ENCODE measurements at regions of chr3 and their contacts with region 1.

Region 1: DNA sequence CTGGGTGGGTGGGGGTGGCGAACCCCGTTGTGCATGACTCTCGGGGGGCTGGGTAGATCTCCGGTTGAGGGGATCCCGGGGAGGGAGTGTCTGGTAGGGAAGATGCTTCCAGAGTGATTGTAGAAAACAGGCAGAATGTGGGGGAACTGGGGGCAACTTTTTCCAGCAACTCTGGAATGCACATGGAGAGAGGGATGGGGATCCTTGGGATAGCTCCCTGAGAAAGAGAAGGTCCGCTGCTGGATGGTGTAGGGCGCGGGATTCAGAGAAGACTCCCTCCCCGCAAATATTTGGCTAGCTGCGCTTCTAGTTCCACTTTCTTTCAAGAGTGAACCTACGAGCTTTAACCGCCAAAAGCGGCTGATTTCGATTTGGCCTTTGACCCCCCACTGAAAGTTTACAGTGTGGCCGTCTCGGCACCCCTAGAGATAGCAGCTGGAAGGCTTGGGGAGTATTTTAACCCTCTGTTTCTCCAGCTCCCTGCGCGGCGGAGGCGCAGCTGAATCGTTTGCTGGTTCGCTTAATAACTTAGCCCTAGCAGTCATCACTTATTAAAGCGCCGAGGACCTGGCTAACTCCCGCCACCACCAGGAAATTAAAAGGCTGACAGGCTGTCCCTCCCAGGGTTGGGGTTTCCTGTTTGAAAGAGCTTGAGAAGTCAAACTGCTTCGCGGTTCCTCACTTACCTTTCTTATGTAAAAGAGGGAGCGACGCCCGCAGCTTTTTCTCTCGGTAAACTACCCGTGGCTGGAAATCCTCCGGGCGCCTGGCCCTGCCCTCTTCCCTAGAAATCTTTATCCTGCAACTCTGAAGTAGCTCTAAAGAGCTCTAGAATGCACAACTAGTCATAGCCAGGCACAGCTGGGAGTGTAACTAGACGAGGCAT is 1.2 kb downstream of the PHLDB2 start:
- DNase-seq: peak; percentile 65 to 82 (median 71)
- H3K4me3 ChIP-seq: peak overlapping the region; percentile 88
- H3K27ac ChIP-seq: peak overlapping the region; percentile 84 to 90
- H3K4me1 ChIP-seq: peaks cover 4% of the 10 kb centered on the region
- H3K27me3 ChIP-seq: no peaks in the 10 kb centered on the region
- CTCF ChIP-seq: peak in 2 of 3 donors; percentile 21 to 67
- EP300 ChIP-seq: no peak
- POLR2A ChIP-seq: peak; percentile 53

Region 2: GRCh38 chr3:111702996-111703985 is 156.9 kb before region 1 on chr3:
- intact Hi-C with region 1: no loop called
- DNase-seq: no peak
- H3K4me3 ChIP-seq: no peak overlapping the region
- H3K27ac ChIP-seq: no peak overlapping the region
- H3K4me1 ChIP-seq: no peaks in the 10 kb centered on the region
- H3K27me3 ChIP-seq: no peaks in the 10 kb centered on the region
- CTCF ChIP-seq: no peak
- EP300 ChIP-seq: no peak
- POLR2A ChIP-seq: no peak

Region 3: GRCh38 chr3:111717601-111718000 is 142.6 kb before region 1 on chr3:
- intact Hi-C with region 1: loop called in 2 of 4 experiments (anchors 5 kb)
- DNase-seq: peak; percentile 62 to 86 (median 71)
- H3K4me3 ChIP-seq: no peak overlapping the region
- H3K27ac ChIP-seq: no peak overlapping the region
- H3K4me1 ChIP-seq: no peaks in the 10 kb centered on the region
- H3K27me3 ChIP-seq: no peaks in the 10 kb centered on the region
- CTCF ChIP-seq: peak; percentile 75 to 97 (median 95)
- EP300 ChIP-seq: no peak
- POLR2A ChIP-seq: no peak

Region 4: GRCh38 chr3:111737706-111738086 is 122.5 kb before region 1 on chr3:
- intact Hi-C with region 1: loop called in 1 of 4 experiments (anchors 5 kb)
- DNase-seq: peak; percentile 40 to 71 (median 63)
- H3K4me3 ChIP-seq: no peak overlapping the region
- H3K27ac ChIP-seq: peak overlapping the region in 1 of 2 donors; percentile 53
- H3K4me1 ChIP-seq: peaks cover 13% of the 10 kb centered on the region
- H3K27me3 ChIP-seq: no peaks in the 10 kb centered on the region
- CTCF ChIP-seq: no peak
- EP300 ChIP-seq: no peak
- POLR2A ChIP-seq: no peak

Region 5: DNA sequence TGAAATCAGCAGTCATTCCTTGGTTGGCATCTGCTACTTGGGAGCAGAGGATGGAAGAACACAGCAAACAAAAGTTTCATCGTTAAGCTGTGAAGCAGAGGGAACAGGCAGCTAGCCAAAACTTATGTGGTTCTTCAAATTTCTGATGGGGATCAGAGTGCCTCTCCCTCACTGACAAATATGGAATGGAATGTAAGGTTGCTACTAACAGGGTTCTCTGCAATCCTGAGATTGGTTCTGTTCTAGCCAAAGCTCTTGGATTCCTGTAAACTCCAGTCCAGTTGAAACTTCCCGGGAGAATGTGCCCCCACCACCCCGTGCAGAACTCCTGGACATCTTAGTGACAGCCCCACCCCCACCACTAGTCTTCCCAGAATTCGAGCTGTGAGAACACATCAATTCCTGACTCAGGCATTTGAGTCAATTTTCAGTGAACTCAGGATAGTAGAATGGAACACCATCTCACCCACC is 57.1 kb before region 1 on chr3:
- intact Hi-C with region 1: loop called in 1 of 4 experiments (anchors 10 kb)
- DNase-seq: peak; percentile 17 to 75 (median 41)
- H3K4me3 ChIP-seq: no peak overlapping the region
- H3K27ac ChIP-seq: peak overlapping the region in 1 of 2 donors; percentile 46
- H3K4me1 ChIP-seq: peaks cover 7% of the 10 kb centered on the region
- H3K27me3 ChIP-seq: no peaks in the 10 kb centered on the region
- CTCF ChIP-seq: no peak
- EP300 ChIP-seq: peak; percentile 70
- POLR2A ChIP-seq: no peak

Region 6: DNA sequence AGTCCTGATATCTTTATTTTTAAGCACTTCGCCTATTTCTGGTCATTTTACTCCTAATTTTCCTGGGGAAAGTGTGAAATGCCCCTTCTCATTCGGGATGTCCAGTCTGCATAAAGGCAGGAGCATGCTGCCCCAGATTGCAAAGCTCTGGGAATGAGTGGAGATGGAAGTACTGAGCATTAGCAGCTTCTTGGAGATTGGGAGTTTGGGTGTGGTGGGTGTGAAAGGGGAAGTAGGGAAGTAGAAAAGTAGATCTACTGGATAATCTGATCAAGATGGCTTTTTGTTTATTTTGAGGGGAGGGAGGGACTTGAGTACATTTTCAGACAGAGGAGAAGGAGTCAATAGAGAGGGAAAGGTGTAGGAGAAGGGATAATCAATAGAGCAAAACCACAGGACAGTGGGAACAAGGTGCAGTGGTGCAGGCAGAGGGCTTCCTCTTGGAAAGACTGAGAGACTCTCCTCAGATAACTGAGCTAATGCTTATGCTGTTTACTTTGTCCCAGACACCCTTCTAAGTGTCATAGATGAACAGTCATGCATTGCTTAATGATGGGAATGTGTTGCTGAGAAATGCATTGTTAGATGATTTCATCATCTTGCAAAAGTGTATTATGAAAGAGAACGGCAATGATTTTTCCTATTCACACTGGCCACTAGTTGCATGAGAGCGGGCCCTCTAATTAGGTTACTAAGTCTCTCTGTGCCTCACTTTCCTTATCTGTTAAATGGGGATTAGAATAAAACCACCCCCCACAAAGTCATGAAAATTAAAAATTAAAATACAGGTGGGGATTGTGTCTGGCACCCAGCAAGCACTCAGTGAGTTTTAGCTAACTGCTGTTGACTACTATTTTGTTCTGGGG is 44.4 kb after region 1 on chr3:
- intact Hi-C with region 1: no loop called
- DNase-seq: no peak
- H3K4me3 ChIP-seq: no peak overlapping the region
- H3K27ac ChIP-seq: no peak overlapping the region
- H3K4me1 ChIP-seq: no peaks in the 10 kb centered on the region
- H3K27me3 ChIP-seq: no peaks in the 10 kb centered on the region
- CTCF ChIP-seq: no peak
- EP300 ChIP-seq: no peak
- POLR2A ChIP-seq: no peak

Region 7: GRCh38 chr3:111924283-111924682 is 64.1 kb after region 1 on chr3:
- intact Hi-C with region 1: loop called in 1 of 4 experiments (anchors 10 kb)
- DNase-seq: peak in 1 of 5 donors; percentile 25
- H3K4me3 ChIP-seq: no peak overlapping the region
- H3K27ac ChIP-seq: no peak overlapping the region
- H3K4me1 ChIP-seq: no peaks in the 10 kb centered on the region
- H3K27me3 ChIP-seq: no peaks in the 10 kb centered on the region
- CTCF ChIP-seq: no peak
- EP300 ChIP-seq: no peak
- POLR2A ChIP-seq: no peak

Region 8: GRCh38 chr3:111967651-111968274 is 107.5 kb after region 1 on chr3:
- intact Hi-C with region 1: loop called in 2 of 4 experiments (anchors 10 kb)
- DNase-seq: peak; percentile 71 to 87 (median 86)
- H3K4me3 ChIP-seq: no peak overlapping the region
- H3K27ac ChIP-seq: no peak overlapping the region
- H3K4me1 ChIP-seq: peaks cover 9% of the 10 kb centered on the region
- H3K27me3 ChIP-seq: no peaks in the 10 kb centered on the region
- CTCF ChIP-seq: peak; percentile 35 to 87 (median 80)
- EP300 ChIP-seq: no peak
- POLR2A ChIP-seq: no peak

Region 9: GRCh38 chr3:112685420-112685819 is 825.2 kb after region 1 on chr3:
- intact Hi-C with region 1: no loop called
- DNase-seq: no peak
- H3K4me3 ChIP-seq: no peak overlapping the region
- H3K27ac ChIP-seq: no peak overlapping the region
- H3K4me1 ChIP-seq: no peaks in the 10 kb centered on the region
- H3K27me3 ChIP-seq: no peaks in the 10 kb centered on the region
- CTCF ChIP-seq: no peak
- EP300 ChIP-seq: no peak
- POLR2A ChIP-seq: no peak

Measured in ovary (tissue), 10 donors.